Mammary epithelial cell (primary cell): ENCODE measurements at regions of chr17 and their contacts with region 1.

Region 1: DNA sequence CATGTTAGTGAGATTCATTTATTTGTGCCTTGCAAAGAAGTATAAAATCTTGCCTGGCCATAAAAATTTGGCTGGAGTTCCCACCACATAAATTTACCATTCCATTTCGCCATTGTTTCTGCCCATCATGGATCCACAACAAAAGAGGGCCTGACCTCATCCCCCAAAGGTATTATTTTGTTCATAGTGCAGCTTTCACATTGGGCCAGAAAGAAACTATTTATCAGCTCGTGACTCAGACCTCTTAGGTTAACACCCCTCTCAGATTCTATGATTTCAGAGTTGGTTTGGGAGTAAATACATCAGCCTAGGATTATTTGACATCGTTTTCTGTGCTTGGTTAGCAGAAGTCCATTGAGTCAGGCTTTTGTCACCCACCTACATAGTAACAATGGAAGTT is 108.1 kb downstream of the SHISA6 start:
- DNase-seq: no peak
- H3K4me3 ChIP-seq: no peak overlapping the region
- H3K27ac ChIP-seq: no peak overlapping the region
- H3K4me1 ChIP-seq: no peaks in the 10 kb centered on the region
- H3K27me3 ChIP-seq: no peaks in the 10 kb centered on the region
- CTCF ChIP-seq: no peak

Region 2: DNA sequence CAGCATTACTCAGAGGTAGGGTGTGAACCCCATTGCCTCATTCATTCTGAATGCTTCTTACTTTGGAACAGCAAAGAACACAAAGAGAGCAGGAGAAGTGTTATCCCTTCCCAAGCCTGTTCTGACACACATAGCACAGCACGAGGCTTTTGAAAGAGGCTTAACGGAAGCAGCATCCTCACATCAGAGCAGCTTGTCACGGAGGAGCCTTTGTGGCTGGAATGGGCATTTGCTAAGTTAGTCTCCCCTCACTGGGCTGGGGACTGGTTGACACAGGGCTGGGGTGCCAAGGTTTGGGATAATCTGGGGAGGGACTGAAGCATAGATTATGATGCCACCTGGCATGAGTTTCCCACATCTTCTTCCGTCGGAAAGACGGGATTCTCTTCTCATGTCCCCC is 81.6 kb after region 1 on chr17:
- CTCF ChIA-PET with region 1: no interaction called
- dilution Hi-C with region 1: loop called (anchors 5 kb)
- in situ Hi-C with region 1: no loop called
- intact Hi-C with region 1: no loop called
- DNase-seq: no peak
- H3K4me3 ChIP-seq: no peak overlapping the region
- H3K27ac ChIP-seq: no peak overlapping the region
- H3K4me1 ChIP-seq: no peaks in the 10 kb centered on the region
- H3K27me3 ChIP-seq: no peaks in the 10 kb centered on the region
- CTCF ChIP-seq: no peak